ENCODE measurements at regions of chr15 and their contacts with region 1.

Region 1: DNA sequence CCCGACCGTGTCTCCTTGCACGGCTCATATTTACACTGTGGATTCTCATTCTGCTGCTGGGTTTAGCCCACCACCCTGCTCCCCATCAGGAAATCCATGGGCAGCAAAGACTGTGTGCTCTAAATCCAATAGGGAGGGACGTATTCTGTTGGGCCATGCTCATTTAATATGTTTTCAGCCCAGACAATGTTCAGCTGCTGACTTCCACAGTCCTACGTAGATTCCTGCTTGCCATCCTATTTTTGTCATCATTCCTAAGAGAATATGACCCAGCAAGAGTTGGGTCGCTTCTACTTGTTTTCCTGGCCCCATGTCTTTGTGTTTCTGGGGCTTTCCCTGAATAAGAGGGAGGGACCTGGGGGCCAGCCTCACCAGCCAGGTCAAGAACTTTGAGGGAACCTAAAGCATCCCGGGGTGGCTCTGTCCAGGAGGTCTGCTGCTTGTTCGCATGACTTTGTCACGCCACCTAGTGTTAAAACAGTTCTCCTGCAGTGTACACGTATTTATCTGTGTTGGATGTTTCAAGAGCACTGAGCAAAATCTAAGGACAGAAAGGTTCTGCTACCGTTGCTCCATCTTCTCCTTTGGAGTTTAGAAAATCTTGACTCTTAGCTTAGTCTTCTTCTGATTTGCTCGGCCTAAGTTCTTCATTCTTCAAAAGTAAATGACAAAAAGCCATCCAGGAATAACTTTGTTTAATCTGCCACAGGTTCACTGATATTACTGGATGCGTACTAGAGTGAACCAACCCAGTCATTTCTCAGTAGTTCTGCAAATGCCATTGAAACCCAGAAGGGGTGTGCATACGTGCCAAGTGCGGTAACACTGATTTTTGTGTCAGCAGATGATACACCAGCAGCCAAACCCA is 79.8 kb upstream of the NR2E3 start:
- DNase-seq: no peak
- ATAC-seq: peak; percentile 72 to 87 (median 78)
- H3K4me3 ChIP-seq: no peak overlapping the region
- H3K27ac ChIP-seq: no peak overlapping the region
- H3K4me1 ChIP-seq: no peaks in the 10 kb centered on the region
- H3K27me3 ChIP-seq: no peaks in the 10 kb centered on the region
- CTCF ChIP-seq: peak; percentile 79

Region 2: DNA sequence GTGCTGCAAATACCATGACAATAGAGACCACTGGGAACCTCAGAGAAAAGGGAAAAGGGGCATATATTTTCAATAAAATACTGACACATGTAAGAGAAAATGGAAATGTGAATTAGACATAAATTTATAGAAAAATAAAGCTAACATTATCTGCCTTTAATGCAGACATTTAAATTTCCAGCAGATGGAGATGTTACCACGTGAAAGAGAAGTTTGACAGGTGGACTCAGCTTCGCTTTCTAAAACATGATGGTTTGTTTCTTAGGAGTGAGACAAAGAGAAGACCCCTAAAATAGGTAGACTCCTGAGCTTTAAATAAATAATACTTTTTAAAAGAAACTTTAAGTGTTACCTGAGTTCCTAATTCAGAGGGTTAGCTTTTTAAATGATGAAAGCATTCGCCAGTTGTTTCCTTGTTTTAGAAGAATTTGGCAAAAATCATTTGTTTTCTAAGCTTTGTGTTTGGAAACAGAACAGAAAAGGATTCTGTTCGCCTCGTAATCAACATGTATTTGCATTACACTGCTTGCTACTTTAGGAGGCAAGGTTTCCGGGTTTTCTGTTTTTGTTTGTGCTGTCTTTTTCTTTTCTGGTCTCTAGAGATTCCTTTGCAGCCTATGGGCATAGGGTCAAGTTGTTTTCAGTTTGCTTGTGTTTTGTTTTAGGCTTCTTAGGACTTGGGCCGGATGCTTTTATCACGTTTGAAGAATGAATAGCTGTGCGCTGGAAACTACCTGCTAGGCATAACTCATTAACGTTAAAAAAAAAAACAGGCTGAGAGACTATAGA is 343.9 kb before region 1 on chr15:
- intact Hi-C with region 1: loop called in 1 of 2 experiments (anchors 5 kb)
- DNase-seq: no peak
- ATAC-seq: peak in 2 of 4 donors; percentile 64 to 79
- H3K4me3 ChIP-seq: no peak overlapping the region
- H3K27ac ChIP-seq: no peak overlapping the region
- H3K4me1 ChIP-seq: peaks cover 19% of the 10 kb centered on the region
- H3K27me3 ChIP-seq: no peaks in the 10 kb centered on the region
- CTCF ChIP-seq: peak; percentile 64

Region 3: GRCh38 chr15:71448688-71449114 is 281.8 kb before region 1 on chr15:
- intact Hi-C with region 1: loop called (anchors 1 to 2 kb)
- DNase-seq: no peak
- ATAC-seq: peak; percentile 61 to 82 (median 73)
- H3K4me3 ChIP-seq: no peak overlapping the region
- H3K27ac ChIP-seq: no peak overlapping the region
- H3K4me1 ChIP-seq: peaks cover 5% of the 10 kb centered on the region
- H3K27me3 ChIP-seq: no peaks in the 10 kb centered on the region
- CTCF ChIP-seq: peak; percentile 88

Region 4: DNA sequence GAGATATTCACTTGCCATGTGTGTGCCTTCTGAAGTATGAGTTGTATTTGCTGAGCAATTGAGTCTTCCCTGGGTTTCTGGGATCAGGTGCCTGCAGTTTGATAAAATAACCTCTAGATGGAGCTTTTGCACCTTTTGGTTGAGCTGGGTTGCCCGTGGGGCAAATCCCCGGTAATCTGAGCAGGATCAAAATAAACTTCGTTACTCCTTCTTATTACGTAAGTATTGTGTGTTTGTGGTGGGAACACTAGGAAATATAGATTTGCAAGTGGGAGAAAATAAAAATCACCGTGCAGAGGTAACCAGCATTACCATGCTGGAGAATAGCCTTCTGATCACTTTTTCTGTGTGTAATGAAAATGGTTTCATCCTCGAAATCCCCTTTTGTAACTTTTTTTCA is 197.5 kb before region 1 on chr15:
- intact Hi-C with region 1: loop called in 1 of 2 experiments (anchors 5 kb)
- DNase-seq: no peak
- ATAC-seq: peak in 1 of 4 donors; percentile 60
- H3K4me3 ChIP-seq: no peak overlapping the region
- H3K27ac ChIP-seq: no peak overlapping the region
- H3K4me1 ChIP-seq: no peaks in the 10 kb centered on the region
- H3K27me3 ChIP-seq: no peaks in the 10 kb centered on the region
- CTCF ChIP-seq: peak; percentile 50

Region 5: DNA sequence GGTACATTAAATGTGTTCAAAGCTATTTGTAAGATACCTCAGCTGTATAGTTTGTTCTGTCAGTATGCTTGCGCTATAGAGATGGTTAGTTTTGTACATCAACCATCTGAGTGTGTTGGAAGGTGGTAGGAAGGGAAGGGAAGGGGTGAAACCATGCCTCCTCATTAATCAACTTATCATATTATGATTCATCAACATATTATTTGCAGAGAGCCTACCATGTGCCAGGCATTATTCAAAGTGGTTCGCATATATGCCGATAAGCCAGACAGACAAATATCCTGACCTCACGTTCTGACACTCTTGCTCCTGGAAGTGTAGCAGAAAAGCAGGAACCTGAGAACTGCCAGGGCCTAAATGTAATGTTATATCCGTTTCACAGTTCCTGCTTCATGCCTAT is 168.3 kb before region 1 on chr15:
- intact Hi-C with region 1: loop called in 1 of 2 experiments (anchors 10 kb)
- DNase-seq: no peak
- ATAC-seq: no peak
- H3K4me3 ChIP-seq: no peak overlapping the region
- H3K27ac ChIP-seq: no peak overlapping the region
- H3K4me1 ChIP-seq: no peaks in the 10 kb centered on the region
- H3K27me3 ChIP-seq: no peaks in the 10 kb centered on the region
- CTCF ChIP-seq: no peak

Region 6: GRCh38 chr15:71572452-71573053 is 158.0 kb before region 1 on chr15:
- intact Hi-C with region 1: loop called (anchors 5 to 10 kb)
- DNase-seq: no peak
- ATAC-seq: peak in 1 of 4 donors; percentile 26
- H3K4me3 ChIP-seq: no peak overlapping the region
- H3K27ac ChIP-seq: no peak overlapping the region
- H3K4me1 ChIP-seq: no peaks in the 10 kb centered on the region
- H3K27me3 ChIP-seq: no peaks in the 10 kb centered on the region
- CTCF ChIP-seq: no peak

Region 7: GRCh38 chr15:71707230-71708050 is 23.1 kb before region 1 on chr15:
- intact Hi-C with region 1: no loop called
- DNase-seq: no peak
- ATAC-seq: no peak
- H3K4me3 ChIP-seq: no peak overlapping the region
- H3K27ac ChIP-seq: peak overlapping the region; percentile 10
- H3K4me1 ChIP-seq: no peaks in the 10 kb centered on the region
- H3K27me3 ChIP-seq: no peaks in the 10 kb centered on the region
- CTCF ChIP-seq: no peak